Activated CD4-positive, alpha-beta T cell treated with anti-CD3 and anti-CD28 coated beads, Interleukin-2, amount 10 ng/mL, durations not matched to agents 24 days and 14 days (primary cell): ENCODE measurements at regions of chr5 and their contacts with region 1.

Region 1: DNA sequence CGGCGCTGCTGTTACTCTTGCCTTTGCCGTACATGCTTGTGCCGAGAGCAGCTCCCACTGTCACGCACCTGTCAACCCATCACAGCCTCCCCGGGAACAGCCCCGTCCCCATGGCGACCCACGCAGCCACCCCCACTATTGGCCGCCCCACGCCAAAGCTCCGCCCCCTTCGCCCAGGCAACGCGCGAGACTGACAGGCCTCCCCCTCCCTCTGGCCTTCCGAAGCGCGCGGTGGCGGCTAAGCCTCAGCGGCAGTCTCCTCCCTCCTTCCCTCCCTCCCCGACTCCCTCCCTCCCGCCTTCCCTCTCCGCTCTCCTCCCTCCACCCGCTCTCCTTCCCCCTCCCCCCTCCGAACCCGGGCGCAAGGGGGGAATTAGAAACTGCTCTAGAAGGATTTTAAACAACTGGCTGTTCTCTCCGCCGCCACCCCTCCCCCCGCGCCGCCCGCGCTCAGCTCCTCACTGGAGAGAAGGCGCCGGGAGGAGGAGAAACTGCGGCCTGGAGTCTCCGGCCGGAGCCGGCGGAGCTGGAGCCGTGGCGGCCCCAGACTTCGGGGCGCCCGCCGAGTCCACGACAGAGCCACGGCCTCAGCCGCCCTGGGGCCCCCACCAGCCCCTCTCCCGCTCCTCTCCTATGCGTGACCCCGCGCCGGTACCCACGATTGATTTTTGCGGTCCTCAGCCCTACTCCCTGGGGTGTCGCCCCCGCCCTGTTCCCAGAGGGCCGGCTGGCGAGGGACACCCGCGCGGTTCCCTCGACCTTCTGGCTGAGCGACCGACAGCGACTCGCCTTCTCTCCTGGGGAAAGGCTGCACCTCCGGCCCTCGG is at the start of gene SSBP2:
- DNase-seq: peak; percentile 100
- H3K4me3 Mint-ChIP-seq: peak within 1 kb of the TSS; percentile 90
- H3K27ac Mint-ChIP-seq: peak within 1 kb of the TSS; percentile 93
- H3K4me1 Mint-ChIP-seq: peaks cover 12% of the 10 kb centered on the region
- H3K27me3 Mint-ChIP-seq: peaks cover 27% of the 10 kb centered on the region
- total RNA-seq, gene SSBP2: 13.1 and 13.4 TPM in 2 replicates

Region 2: DNA sequence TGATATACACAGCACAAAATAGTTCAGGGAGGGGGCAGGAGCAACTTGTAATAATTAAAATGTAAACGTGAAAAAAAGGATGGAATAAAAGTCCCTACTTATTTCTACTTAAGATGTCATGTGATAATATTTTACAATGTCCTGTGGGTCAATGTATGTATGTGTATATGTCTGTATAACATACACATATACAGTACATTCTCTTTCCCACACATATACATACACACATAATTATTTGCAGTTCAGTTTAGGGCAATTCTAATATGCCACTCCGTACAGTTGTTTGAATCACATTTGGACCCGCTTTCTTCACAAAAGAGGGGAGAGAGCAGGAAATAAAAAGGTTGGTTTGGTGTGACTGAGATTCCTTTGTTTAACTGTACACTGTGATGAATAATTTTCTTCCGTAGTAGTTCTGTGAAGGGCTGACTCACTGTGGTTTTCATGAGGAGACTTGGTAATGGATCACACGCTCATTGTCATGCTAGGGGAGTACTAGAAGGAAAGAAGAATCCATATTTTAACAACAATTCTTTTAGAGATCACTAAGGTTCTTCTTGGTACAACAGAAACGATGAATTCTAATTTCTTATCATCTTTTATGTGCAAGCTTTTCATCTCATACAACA is 331.1 kb before region 1 on chr5:
- intact Hi-C with region 1: loop called (anchors 2 kb)
- DNase-seq: peak; percentile 74
- H3K4me3 Mint-ChIP-seq: no peak overlapping the region
- H3K27ac Mint-ChIP-seq: peak overlapping the region; percentile 8
- H3K4me1 Mint-ChIP-seq: peaks cover 26% of the 10 kb centered on the region
- H3K27me3 Mint-ChIP-seq: no peaks in the 10 kb centered on the region

Region 3: GRCh38 chr5:81513982-81514381 is 237.2 kb before region 1 on chr5:
- intact Hi-C with region 1: loop called (anchors 2 kb)
- DNase-seq: no peak
- H3K4me3 Mint-ChIP-seq: no peak overlapping the region
- H3K27ac Mint-ChIP-seq: no peak overlapping the region
- H3K4me1 Mint-ChIP-seq: no peaks in the 10 kb centered on the region
- H3K27me3 Mint-ChIP-seq: no peaks in the 10 kb centered on the region

Region 4: GRCh38 chr5:81768667-81769452 is 17.6 kb after region 1 on chr5:
- intact Hi-C with region 1: no loop called
- DNase-seq: no peak
- H3K4me3 Mint-ChIP-seq: no peak overlapping the region
- H3K27ac Mint-ChIP-seq: no peak overlapping the region
- H3K4me1 Mint-ChIP-seq: peaks cover 3% of the 10 kb centered on the region
- H3K27me3 Mint-ChIP-seq: peaks cover 2% of the 10 kb centered on the region

Region 5: DNA sequence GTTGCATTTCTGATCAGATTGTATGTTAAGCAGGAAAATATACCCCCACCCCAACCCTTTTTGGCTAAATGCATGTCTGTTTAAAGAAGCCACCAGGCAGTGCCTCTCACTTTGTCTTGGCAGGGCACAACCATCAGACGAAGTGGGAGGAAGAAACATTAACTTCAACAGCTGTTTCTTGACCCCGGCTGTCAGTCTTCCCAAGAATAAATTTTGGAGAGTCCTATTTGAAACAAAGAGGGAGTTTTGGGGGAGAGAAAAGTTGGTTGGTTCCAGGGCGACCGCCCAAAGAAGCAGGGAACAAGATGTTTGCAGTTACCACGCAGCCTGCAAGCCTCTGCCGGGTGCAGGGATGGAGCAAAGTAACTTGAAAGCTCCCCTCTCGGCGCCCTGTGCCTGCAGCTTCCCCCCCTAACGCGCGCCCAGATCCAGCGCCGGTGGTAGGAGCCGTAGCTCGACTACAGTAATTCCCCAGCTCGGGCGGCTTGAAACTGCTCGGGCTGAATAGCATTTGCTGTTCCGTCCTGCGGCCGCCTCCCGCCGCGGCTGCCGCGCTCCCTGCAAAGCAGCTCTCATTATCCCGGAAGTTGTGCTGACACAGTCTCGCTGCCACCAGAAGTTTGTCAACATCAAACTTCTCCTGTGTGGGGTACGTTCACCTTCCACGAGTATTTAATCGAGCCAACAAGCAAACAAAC is 100.4 kb after region 1 on chr5:
- intact Hi-C with region 1: loop called (anchors 1 kb)
- DNase-seq: peak; percentile 98
- H3K4me3 Mint-ChIP-seq: peak overlapping the region; percentile 88
- H3K27ac Mint-ChIP-seq: peak overlapping the region; percentile 92
- H3K4me1 Mint-ChIP-seq: peaks cover 40% of the 10 kb centered on the region
- H3K27me3 Mint-ChIP-seq: no peaks in the 10 kb centered on the region

Region 6: DNA sequence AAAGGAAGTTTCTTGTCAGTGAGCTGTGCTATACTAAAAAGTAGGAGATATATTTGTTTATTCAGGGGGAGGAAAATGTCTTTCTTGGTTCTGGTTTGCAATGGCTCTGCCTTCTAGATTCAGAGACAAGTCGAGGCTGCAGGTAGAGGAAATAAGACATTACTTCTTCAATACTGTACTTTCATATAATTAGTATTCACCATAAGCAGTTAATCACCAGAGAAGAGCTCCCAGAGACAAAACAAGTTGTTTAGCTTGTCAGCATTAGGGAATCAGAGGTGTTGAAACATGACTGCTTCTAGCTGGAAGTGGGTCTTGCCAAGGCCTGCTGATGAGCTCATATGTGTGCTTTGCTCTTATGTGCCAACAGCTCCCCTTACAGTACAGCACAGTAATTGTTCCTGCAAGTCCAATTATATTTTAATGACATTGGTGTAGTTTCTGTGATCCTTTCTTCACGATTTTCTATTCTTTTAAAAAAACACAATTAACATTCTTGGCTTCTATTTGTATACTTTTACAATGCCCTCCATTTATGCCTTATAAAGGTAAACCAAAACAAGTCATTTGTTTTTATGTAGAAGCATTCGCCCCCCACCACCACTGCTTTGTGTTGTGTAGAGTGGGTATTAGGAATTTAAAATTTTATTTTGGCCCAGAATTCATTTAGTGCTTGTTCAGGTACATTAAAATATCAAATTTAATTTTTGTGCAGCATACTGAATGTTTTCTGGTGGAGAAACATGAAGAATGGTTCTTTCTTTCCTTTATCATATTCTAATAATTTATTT is 414.7 kb after region 1 on chr5:
- intact Hi-C with region 1: loop called (anchors 5 kb)
- DNase-seq: peak; percentile 76
- H3K4me3 Mint-ChIP-seq: no peak overlapping the region
- H3K27ac Mint-ChIP-seq: no peak overlapping the region
- H3K4me1 Mint-ChIP-seq: peaks cover 5% of the 10 kb centered on the region
- H3K27me3 Mint-ChIP-seq: no peaks in the 10 kb centered on the region